ENCODE measurements at regions of chr20 and their contacts with region 1.

Region 1: GRCh38 chr20:22315073-22315472 is 269.3 kb downstream of the FOXA2 start:
- DNase-seq: no peak
- H3K27ac ChIP-seq: no peak overlapping the region
- CTCF ChIP-seq: no peak

Region 2: GRCh38 chr20:21719592-21720214 is 595.4 kb before region 1 on chr20:
- CTCF ChIA-PET with region 1: interaction called, 13 read pairs
- POLR2A ChIA-PET with region 1: no interaction called
- DNase-seq: peak; percentile 63
- H3K27ac ChIP-seq: no peak overlapping the region
- CTCF ChIP-seq: peak; percentile 93

Region 3: GRCh38 chr20:22070610-22071058 is 244.4 kb before region 1 on chr20:
- CTCF ChIA-PET with region 1: no interaction called
- POLR2A ChIA-PET with region 1: no interaction called
- DNase-seq: no peak
- H3K27ac ChIP-seq: no peak overlapping the region
- CTCF ChIP-seq: no peak

Region 4: GRCh38 chr20:22789676-22790075 is 474.6 kb after region 1 on chr20:
- CTCF ChIA-PET with region 1: no interaction called
- POLR2A ChIA-PET with region 1: no interaction called
- DNase-seq: no peak
- H3K27ac ChIP-seq: no peak overlapping the region
- CTCF ChIP-seq: no peak

Measured in RWPE1 (cell line).